Right ventricle myocardium inferior (tissue), 1 donor: ENCODE measurements at regions of chr1 and their contacts with region 1.

Region 1: DNA sequence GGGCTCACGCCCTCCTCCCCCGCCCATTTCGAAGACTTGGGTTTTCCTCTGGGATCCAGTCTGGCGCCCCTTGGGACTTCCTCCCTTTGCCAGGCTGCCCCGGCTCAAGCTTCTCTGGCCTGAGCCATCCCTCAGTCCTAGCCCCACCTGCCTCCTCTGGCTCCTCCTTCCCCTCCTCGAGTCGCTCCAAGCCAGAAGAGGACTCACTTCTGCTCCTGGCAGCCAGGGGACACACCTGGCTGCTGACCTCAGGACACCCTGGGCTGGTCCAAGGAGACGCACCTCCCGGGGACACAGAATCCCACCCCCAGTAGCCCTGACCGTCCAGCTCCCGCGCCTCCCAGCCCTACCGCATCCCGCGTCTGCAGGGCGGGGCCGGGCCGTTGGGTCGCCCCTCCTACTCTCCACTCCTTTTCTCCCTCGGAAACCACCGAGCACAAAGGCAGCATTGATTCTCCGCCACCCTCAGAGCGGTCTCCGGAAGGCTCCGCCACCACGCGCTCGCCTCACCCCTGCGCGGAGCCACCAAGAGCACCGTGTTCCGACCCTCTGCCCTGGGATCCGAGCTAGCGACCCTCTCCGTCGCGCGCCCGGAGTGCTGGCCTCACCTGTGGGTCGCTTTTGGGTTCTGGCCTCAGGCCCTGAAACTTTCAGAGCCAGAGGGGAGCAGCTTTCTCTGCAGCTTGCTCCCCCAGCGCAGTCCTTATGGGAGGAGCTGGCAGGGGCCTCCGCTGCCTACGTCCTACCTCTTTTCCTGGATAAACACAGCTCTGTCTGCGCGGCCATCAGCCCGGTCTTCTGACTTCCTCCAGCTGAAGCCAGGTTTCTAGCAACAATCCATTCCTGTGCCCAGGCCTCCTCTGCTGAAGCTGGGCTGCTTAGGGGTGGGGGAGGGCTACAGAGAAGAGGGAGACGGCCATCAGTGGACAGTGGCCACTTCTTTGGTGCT is at the start of gene C2CD4D:
- DNase-seq: no peak
- ATAC-seq: peak; percentile 82
- total RNA-seq, gene C2CD4D: not detected

Region 2: GRCh38 chr1:151539990-151540981 is 299.4 kb before region 1 on chr1 and contains the start of gene TUFT1:
- intact Hi-C with region 1: loop called (anchors 5 kb)
- DNase-seq: peak; percentile 96
- ATAC-seq: peak; percentile 98
- total RNA-seq, gene TUFT1: 3.5 TPM

Region 3: DNA sequence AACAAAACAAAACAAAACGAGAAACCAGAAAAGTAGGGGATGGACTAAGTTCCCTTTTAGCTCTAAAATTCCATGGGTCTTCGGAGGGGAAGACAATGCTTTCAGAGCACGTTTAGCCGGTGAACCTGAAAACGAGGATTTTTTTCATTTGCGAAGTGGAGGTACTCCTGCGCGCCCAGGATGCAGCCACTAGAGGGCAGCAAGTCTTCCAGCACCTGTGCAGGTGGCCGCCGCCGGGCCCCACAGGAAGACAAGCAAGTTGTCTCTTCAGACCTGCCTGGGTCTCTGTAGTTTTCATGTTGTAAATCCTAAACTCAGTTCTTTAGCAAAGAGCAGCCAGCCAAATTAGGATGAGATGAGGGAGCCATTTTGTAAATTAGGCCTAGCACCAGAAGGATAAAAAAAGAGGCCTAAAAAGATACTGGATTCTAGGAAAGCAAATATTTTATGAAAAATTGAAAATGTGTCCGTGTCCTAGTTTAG is 245.5 kb before region 1 on chr1:
- intact Hi-C with region 1: loop called (anchors 10 kb)
- DNase-seq: peak; percentile 91
- ATAC-seq: peak; percentile 48

Region 4: GRCh38 chr1:151790071-151790940 is 49.4 kb before region 1 on chr1 and contains the start of gene TDRKH:
- intact Hi-C with region 1: loop called (anchors 2 kb)
- DNase-seq: peak; percentile 99
- ATAC-seq: peak; percentile 99
- total RNA-seq, gene TDRKH: 4.5 TPM